ENCODE measurements at regions of chr14 and their contacts with region 1.

Region 1: GRCh38 chr14:82889701-82890100 is 1356.0 kb upstream of the SEL1L start:
- DNase-seq: no peak
- H3K4me3 Mint-ChIP-seq: no peak overlapping the region
- H3K27ac Mint-ChIP-seq: no peak overlapping the region
- H3K4me1 Mint-ChIP-seq: no peaks in the 10 kb centered on the region
- H3K27me3 Mint-ChIP-seq: no peaks in the 10 kb centered on the region
- CTCF ChIP-seq: no peak

Region 2: GRCh38 chr14:82861313-82861712 is 28.4 kb before region 1 on chr14:
- CTCF ChIA-PET with region 1: no interaction called
- intact Hi-C with region 1: no loop called
- DNase-seq: no peak
- H3K4me3 Mint-ChIP-seq: no peak overlapping the region
- H3K27ac Mint-ChIP-seq: no peak overlapping the region
- H3K4me1 Mint-ChIP-seq: no peaks in the 10 kb centered on the region
- H3K27me3 Mint-ChIP-seq: no peaks in the 10 kb centered on the region
- CTCF ChIP-seq: no peak

Region 3: GRCh38 chr14:82935691-82936090 is 46.0 kb after region 1 on chr14:
- CTCF ChIA-PET with region 1: no interaction called
- intact Hi-C with region 1: no loop called
- DNase-seq: no peak
- H3K4me3 Mint-ChIP-seq: no peak overlapping the region
- H3K27ac Mint-ChIP-seq: no peak overlapping the region
- H3K4me1 Mint-ChIP-seq: no peaks in the 10 kb centered on the region
- H3K27me3 Mint-ChIP-seq: no peaks in the 10 kb centered on the region
- CTCF ChIP-seq: no peak

Region 4: DNA sequence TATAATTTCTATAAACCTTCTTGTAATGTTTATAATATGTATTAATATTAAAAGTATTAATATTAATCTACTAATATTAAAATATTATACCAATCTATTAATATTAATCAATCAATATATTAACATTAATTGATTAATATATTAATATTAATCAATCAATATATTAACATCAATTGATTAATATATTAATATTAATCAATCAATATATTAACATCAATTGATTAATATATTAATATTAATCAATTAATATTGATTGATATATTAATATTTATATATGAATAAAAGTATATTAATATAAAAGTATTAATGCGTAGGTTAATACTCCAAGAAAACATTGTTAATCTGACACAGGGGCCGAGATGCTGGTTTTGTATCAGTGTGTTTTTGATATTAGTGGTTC is 74.0 kb after region 1 on chr14:
- CTCF ChIA-PET with region 1: no interaction called
- intact Hi-C with region 1: no loop called
- DNase-seq: no peak
- H3K4me3 Mint-ChIP-seq: no peak overlapping the region
- H3K27ac Mint-ChIP-seq: no peak overlapping the region
- H3K4me1 Mint-ChIP-seq: no peaks in the 10 kb centered on the region
- H3K27me3 Mint-ChIP-seq: no peaks in the 10 kb centered on the region
- CTCF ChIP-seq: no peak

Region 5: DNA sequence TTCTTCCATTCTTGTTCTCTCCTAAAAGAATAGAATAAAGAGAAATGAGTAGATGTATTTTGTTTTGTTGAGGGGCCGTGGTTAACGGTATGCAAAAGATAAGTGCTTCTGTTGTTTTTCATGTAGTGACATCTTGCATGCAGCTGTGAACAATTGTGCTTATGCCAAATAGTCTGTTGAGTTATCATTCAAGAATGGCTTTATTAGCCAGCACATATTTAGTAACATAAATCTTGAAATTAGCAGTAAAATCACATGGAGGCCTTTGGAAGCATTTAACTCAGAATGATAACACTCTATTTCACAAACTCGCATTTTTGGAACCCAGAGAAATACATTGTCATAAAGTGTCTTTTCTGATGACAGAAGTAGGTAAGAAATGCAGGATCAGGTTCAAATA is 868.2 kb after region 1 on chr14:
- CTCF ChIA-PET with region 1: no interaction called
- intact Hi-C with region 1: loop called (anchors 5 kb)
- DNase-seq: no peak
- H3K4me3 Mint-ChIP-seq: no peak overlapping the region
- H3K27ac Mint-ChIP-seq: no peak overlapping the region
- H3K4me1 Mint-ChIP-seq: no peaks in the 10 kb centered on the region
- H3K27me3 Mint-ChIP-seq: no peaks in the 10 kb centered on the region
- CTCF ChIP-seq: no peak